H1 (cell line): ENCODE measurements at regions of chr21 and their contacts with region 1.

Region 1: GRCh38 chr21:44792702-44793591 is 8.7 kb downstream of the UBE2G2 start:
- DNase-seq: peak in 1 of 2 experiments; percentile 55
- H3K4me3 ChIP-seq: no peak overlapping the region
- H3K27ac ChIP-seq: no peak overlapping the region
- H3K4me1 ChIP-seq: peaks cover 0 to 5% (median 4%) of the 10 kb centered on the region in 4 experiments; a peak in 3 of 7 replicates
- H3K27me3 ChIP-seq: no peaks in the 10 kb centered on the region
- CTCF ChIP-seq: peak; percentile 54 to 86 (median 77)
- EP300 ChIP-seq: no peak
- POLR2A ChIP-seq: no peak
- RAD21 ChIP-seq: peak; percentile 90 to 95

Region 2: GRCh38 chr21:44510508-44511210 is 282.3 kb before region 1 on chr21:
- CTCF ChIA-PET with region 1: interaction called, 21 read pairs
- POLR2A ChIA-PET with region 1: no interaction called
- DNase-seq: peak; percentile 43 to 91
- H3K4me3 ChIP-seq: peak overlapping the region in 1 of 4 experiments; percentile 35; a peak in 1 of 8 replicates
- H3K27ac ChIP-seq: no peak overlapping the region
- H3K4me1 ChIP-seq: no peaks in the 10 kb centered on the region; a peak in 3 of 7 replicates
- H3K27me3 ChIP-seq: no peaks in the 10 kb centered on the region
- CTCF ChIP-seq: peak in 2 of 3 experiments; percentile 88 to 92; a peak in 3 of 4 replicates
- EP300 ChIP-seq: no peak
- POLR2A ChIP-seq: no peak
- RAD21 ChIP-seq: peak; percentile 90 to 96

Region 3: DNA sequence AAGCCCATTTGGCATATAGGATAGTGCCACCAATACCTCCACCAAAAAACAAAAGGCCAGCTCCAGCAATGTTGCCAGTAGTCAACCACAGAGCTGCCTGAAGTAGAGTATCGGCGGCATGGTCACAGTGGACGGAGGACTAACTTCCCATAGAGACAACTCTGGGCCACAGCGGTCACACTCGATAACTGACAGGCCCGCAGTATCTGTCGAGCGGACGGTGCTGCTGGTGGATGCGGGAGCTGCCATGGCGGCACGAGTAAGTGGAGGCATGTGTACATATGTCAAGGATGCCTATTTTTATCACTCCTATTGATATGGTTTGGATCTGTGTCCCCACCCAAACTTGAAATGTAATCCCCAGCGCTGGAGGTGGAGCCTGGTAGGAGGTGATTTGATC is 115.1 kb before region 1 on chr21:
- CTCF ChIA-PET with region 1: no interaction called
- POLR2A ChIA-PET with region 1: no interaction called
- DNase-seq: no peak
- H3K4me3 ChIP-seq: no peak overlapping the region
- H3K27ac ChIP-seq: no peak overlapping the region
- H3K4me1 ChIP-seq: no peaks in the 10 kb centered on the region; a peak in 1 of 7 replicates
- H3K27me3 ChIP-seq: no peaks in the 10 kb centered on the region
- CTCF ChIP-seq: no peak
- EP300 ChIP-seq: no peak
- POLR2A ChIP-seq: no peak
- RAD21 ChIP-seq: no peak

Region 4: GRCh38 chr21:44709426-44710293 is 83.3 kb before region 1 on chr21:
- CTCF ChIA-PET with region 1: interaction called, 14 read pairs
- POLR2A ChIA-PET with region 1: interaction called, 5 read pairs
- DNase-seq: peak in 1 of 2 experiments; percentile 49
- H3K4me3 ChIP-seq: peak overlapping the region; percentile 25 to 58 (median 40); a peak in 7 of 8 replicates
- H3K27ac ChIP-seq: no peak overlapping the region
- H3K4me1 ChIP-seq: peaks cover 0 to 58% (median 44%) of the 10 kb centered on the region in 4 experiments; a peak in 6 of 7 replicates
- H3K27me3 ChIP-seq: peaks cover 24 to 75% (median 68%) of the 10 kb centered on the region in 4 experiments
- CTCF ChIP-seq: no peak
- EP300 ChIP-seq: no peak
- POLR2A ChIP-seq: no peak
- RAD21 ChIP-seq: no peak

Region 5: GRCh38 chr21:44761011-44761729 is 31.8 kb before region 1 on chr21:
- CTCF ChIA-PET with region 1: interaction called, 11 read pairs
- POLR2A ChIA-PET with region 1: no interaction called
- DNase-seq: no peak
- H3K4me3 ChIP-seq: no peak overlapping the region
- H3K27ac ChIP-seq: no peak overlapping the region
- H3K4me1 ChIP-seq: peaks cover 0 to 35% (median 15%) of the 10 kb centered on the region in 4 experiments; a peak in 6 of 7 replicates
- H3K27me3 ChIP-seq: no peaks in the 10 kb centered on the region
- CTCF ChIP-seq: peak in 2 of 3 experiments; percentile 67 to 90; a peak in 3 of 4 replicates
- EP300 ChIP-seq: no peak
- POLR2A ChIP-seq: no peak
- RAD21 ChIP-seq: peak; percentile 65 to 79

Region 6: GRCh38 chr21:44779417-44780136 is 13.4 kb before region 1 on chr21:
- CTCF ChIA-PET with region 1: interaction called, 24 read pairs
- POLR2A ChIA-PET with region 1: interaction called, 4 read pairs
- DNase-seq: no peak
- H3K4me3 ChIP-seq: no peak overlapping the region
- H3K27ac ChIP-seq: no peak overlapping the region
- H3K4me1 ChIP-seq: no peaks in the 10 kb centered on the region
- H3K27me3 ChIP-seq: no peaks in the 10 kb centered on the region
- CTCF ChIP-seq: no peak
- EP300 ChIP-seq: no peak
- POLR2A ChIP-seq: no peak
- RAD21 ChIP-seq: no peak

Region 7: DNA sequence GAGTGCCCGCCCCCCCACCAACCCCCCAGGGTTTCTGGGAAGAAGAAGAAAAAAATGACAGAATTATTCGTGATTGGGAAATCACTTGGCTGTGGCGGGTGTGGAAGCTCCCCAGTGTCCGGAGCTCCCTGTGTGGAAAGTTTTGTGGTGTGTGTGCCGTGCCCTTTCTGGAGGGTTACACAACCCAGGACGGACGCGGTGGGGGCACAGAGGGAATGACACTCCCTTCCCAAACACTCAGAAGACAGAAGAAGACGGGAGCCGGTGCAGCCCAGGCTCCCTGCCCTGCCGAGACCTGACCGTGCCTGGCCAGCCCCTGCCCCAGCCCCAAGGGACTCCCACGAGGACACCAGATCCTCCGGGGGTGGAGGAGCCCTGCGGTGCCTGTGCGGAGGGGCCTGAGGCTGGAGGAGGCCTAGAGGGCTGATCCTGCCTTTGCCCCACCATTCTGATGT is 248.4 kb after region 1 on chr21:
- CTCF ChIA-PET with region 1: no interaction called
- POLR2A ChIA-PET with region 1: no interaction called
- DNase-seq: no peak
- H3K4me3 ChIP-seq: no peak overlapping the region
- H3K27ac ChIP-seq: no peak overlapping the region
- H3K4me1 ChIP-seq: no peaks in the 10 kb centered on the region; a peak in 1 of 7 replicates
- H3K27me3 ChIP-seq: no peaks in the 10 kb centered on the region; a peak in 4 of 7 replicates
- CTCF ChIP-seq: no peak
- EP300 ChIP-seq: no peak
- POLR2A ChIP-seq: no peak
- RAD21 ChIP-seq: no peak